ENCODE measurements at regions of chr7 and their contacts with region 1.

Region 1: GRCh38 chr7:55132890-55133551 is 114.2 kb downstream of the EGFR start:
- DNase-seq: peak; percentile 88 to 91
- ATAC-seq: peak; percentile 83
- H3K4me3 ChIP-seq: peak overlapping the region; percentile 7; the same call in 1 of the 3 replicates
- H3K27ac ChIP-seq: peak overlapping the region; percentile 93 to 98
- H3K4me1 ChIP-seq: peaks cover 71% of the 10 kb centered on the region
- CTCF ChIP-seq: no peak
- EP300 ChIP-seq: peak; percentile 64 to 67; a peak in 2 of 5 replicates
- POLR2A ChIP-seq: no peak
- RAD21 ChIP-seq: peak; percentile 25 to 38; a peak in 4 of 5 replicates

Region 2: DNA sequence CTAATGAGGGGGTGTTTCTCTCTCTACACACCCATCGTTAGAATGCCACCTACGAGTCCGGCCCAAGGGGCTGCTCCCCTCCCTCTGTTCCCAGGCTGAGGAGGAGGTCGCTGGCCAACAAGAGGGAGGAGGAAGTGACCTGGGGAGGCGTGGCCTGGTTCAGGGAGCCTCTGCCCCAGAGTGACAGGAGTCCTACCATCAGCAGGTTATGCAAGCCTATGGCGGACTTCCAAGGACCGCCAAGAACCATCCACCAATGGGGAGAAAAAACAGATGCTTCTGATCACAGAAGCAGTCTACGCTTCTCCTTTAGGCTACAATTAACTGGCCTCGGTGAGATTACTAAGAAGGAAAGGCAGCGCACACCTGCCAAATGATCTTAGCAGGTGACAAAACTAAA is 126.5 kb before region 1 on chr7:
- CTCF ChIA-PET with region 1: no interaction called
- POLR2A ChIA-PET with region 1: no interaction called
- DNase-seq: no peak
- ATAC-seq: no peak
- H3K4me3 ChIP-seq: no peak overlapping the region
- H3K27ac ChIP-seq: no peak overlapping the region
- H3K4me1 ChIP-seq: no peaks in the 10 kb centered on the region
- CTCF ChIP-seq: no peak
- EP300 ChIP-seq: no peak
- POLR2A ChIP-seq: no peak
- RAD21 ChIP-seq: no peak

Region 3: GRCh38 chr7:55065079-55065478 is 67.9 kb before region 1 on chr7:
- CTCF ChIA-PET with region 1: interaction called, 5 read pairs
- POLR2A ChIA-PET with region 1: interaction called, 18 read pairs
- DNase-seq: peak; percentile 84 to 93
- ATAC-seq: peak; percentile 88 to 89
- H3K4me3 ChIP-seq: no peak overlapping the region
- H3K27ac ChIP-seq: peak overlapping the region; percentile 84 to 92
- H3K4me1 ChIP-seq: peaks cover 98% of the 10 kb centered on the region
- CTCF ChIP-seq: no peak
- EP300 ChIP-seq: peak in 1 of 2 experiments; percentile 72; a peak in 1 of 5 replicates
- POLR2A ChIP-seq: no peak
- RAD21 ChIP-seq: no peak; a peak in 1 of 5 replicates

Region 4: DNA sequence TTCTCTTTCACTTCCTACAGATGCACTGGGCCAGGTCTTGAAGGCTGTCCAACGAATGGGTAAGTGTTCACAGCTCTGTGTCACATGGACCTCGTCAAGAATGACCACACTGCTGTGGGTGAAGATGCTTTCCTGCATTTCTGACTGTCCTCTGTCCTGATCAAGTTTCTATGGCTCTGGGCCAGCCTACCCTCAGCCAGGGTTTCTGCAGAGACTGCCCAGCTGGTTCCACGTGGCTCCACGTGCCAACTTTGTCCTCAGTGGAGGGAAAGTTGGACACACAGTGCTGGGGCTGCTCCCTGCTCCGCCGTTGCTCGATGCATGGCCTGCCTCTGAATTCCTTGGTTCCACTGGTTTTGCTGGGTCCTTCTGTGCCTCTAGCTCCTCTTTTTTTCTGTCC is 38.1 kb after region 1 on chr7:
- CTCF ChIA-PET with region 1: no interaction called
- POLR2A ChIA-PET with region 1: no interaction called
- DNase-seq: no peak
- ATAC-seq: no peak; a peak in 1 of 6 replicates
- H3K4me3 ChIP-seq: no peak overlapping the region
- H3K27ac ChIP-seq: no peak overlapping the region
- H3K4me1 ChIP-seq: no peaks in the 10 kb centered on the region
- CTCF ChIP-seq: no peak
- EP300 ChIP-seq: no peak
- POLR2A ChIP-seq: no peak
- RAD21 ChIP-seq: no peak

Measured in A549 (cell line).